ENCODE measurements at regions of chr7 and their contacts with region 1.

Region 1: DNA sequence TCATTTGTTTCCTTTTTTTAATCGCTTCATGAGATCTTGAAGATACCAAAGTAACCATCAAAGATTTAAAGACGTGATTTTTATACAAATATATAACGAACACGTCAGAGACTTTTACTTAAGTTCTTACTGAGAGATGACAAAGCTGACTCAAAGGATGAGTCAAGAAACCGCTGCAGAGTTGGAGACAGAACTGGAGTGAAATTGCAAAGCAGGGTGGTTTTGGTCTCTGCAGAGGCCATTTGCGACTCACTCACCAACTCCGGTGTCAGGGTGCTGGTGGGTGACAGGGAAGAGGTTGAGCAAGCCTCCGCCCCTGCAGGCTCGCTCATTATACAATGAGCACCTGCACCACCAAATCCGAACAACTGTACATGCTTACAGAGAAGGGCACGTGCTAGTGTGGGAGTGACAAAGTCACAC is 75.2 kb downstream of the DNAJB6 start:
- DNase-seq: peak; percentile 82
- ATAC-seq: peak; percentile 96
- H3K4me3 Mint-ChIP-seq: peak overlapping the region; percentile 43
- H3K27ac Mint-ChIP-seq: peak overlapping the region; percentile 90
- H3K4me1 Mint-ChIP-seq: peaks cover 16% of the 10 kb centered on the region
- H3K27me3 Mint-ChIP-seq: no peaks in the 10 kb centered on the region

Region 2: DNA sequence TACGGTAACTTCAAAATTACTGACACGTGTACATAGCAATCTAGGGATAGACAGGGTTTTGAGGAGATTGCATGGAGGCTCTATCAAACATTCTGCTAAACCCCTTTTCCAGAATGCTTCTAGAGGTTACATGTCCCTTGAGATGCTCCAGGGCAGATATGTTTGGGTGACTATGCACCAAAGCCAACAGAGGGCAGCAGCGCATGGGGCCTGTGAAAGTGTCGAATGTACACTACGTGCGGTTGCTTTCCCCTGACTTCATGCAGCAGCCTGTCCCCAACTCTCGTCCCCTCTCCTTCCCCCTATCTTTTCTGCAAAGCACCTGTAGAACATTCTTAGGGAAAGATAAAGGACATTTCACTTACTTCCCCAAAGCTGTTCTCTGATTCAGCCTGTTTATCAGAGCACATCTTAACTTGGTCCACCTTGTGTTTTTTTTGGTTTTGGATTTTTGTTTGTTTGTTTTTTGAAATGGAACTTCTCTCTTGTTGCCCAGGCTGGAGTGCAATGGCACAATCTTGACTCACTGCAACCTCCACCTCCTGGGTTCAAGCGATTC is 183.1 kb before region 1 on chr7:
- CTCF ChIA-PET with region 1: no interaction called
- POLR2A ChIA-PET with region 1: no interaction called
- intact Hi-C with region 1: no loop called
- DNase-seq: peak; percentile 55
- ATAC-seq: peak; percentile 53
- H3K4me3 Mint-ChIP-seq: no peak overlapping the region
- H3K27ac Mint-ChIP-seq: no peak overlapping the region
- H3K4me1 Mint-ChIP-seq: peaks cover 3% of the 10 kb centered on the region
- H3K27me3 Mint-ChIP-seq: no peaks in the 10 kb centered on the region

Region 3: GRCh38 chr7:157432957-157433576 is 21.0 kb after region 1 on chr7:
- CTCF ChIA-PET with region 1: no interaction called
- POLR2A ChIA-PET with region 1: no interaction called
- intact Hi-C with region 1: no loop called
- DNase-seq: peak; percentile 77
- ATAC-seq: peak; percentile 67
- H3K4me3 Mint-ChIP-seq: peak overlapping the region; percentile 41
- H3K27ac Mint-ChIP-seq: no peak overlapping the region
- H3K4me1 Mint-ChIP-seq: peaks cover 13% of the 10 kb centered on the region
- H3K27me3 Mint-ChIP-seq: no peaks in the 10 kb centered on the region

Region 4: GRCh38 chr7:157462419-157462771 is 50.4 kb after region 1 on chr7:
- CTCF ChIA-PET with region 1: no interaction called
- POLR2A ChIA-PET with region 1: no interaction called
- intact Hi-C with region 1: no loop called
- DNase-seq: no peak
- ATAC-seq: no peak
- H3K4me3 Mint-ChIP-seq: no peak overlapping the region
- H3K27ac Mint-ChIP-seq: no peak overlapping the region
- H3K4me1 Mint-ChIP-seq: peaks cover 6% of the 10 kb centered on the region
- H3K27me3 Mint-ChIP-seq: no peaks in the 10 kb centered on the region

Region 5: GRCh38 chr7:157495594-157495993 is 83.6 kb after region 1 on chr7:
- CTCF ChIA-PET with region 1: no interaction called
- POLR2A ChIA-PET with region 1: no interaction called
- intact Hi-C with region 1: loop called in 1 of 2 experiments (anchors 2 kb)
- DNase-seq: peak; percentile 38
- ATAC-seq: peak; percentile 45
- H3K4me3 Mint-ChIP-seq: no peak overlapping the region
- H3K27ac Mint-ChIP-seq: no peak overlapping the region
- H3K4me1 Mint-ChIP-seq: peaks cover 35% of the 10 kb centered on the region
- H3K27me3 Mint-ChIP-seq: peaks cover 9% of the 10 kb centered on the region

Region 6: GRCh38 chr7:157576440-157576886 is 164.4 kb after region 1 on chr7:
- CTCF ChIA-PET with region 1: no interaction called
- POLR2A ChIA-PET with region 1: no interaction called
- intact Hi-C with region 1: no loop called
- DNase-seq: peak; percentile 75
- ATAC-seq: peak; percentile 85
- H3K4me3 Mint-ChIP-seq: peak overlapping the region; percentile 68
- H3K27ac Mint-ChIP-seq: peak overlapping the region; percentile 82
- H3K4me1 Mint-ChIP-seq: peaks cover 23% of the 10 kb centered on the region
- H3K27me3 Mint-ChIP-seq: no peaks in the 10 kb centered on the region

Measured in activated CD4-positive, alpha-beta T cell treated with anti-CD3 and anti-CD28 coated beads for 36 hours (primary cell).